Heart left ventricle (tissue), 16 donors: ENCODE measurements at regions of chr11 and their contacts with region 1.

Region 1: DNA sequence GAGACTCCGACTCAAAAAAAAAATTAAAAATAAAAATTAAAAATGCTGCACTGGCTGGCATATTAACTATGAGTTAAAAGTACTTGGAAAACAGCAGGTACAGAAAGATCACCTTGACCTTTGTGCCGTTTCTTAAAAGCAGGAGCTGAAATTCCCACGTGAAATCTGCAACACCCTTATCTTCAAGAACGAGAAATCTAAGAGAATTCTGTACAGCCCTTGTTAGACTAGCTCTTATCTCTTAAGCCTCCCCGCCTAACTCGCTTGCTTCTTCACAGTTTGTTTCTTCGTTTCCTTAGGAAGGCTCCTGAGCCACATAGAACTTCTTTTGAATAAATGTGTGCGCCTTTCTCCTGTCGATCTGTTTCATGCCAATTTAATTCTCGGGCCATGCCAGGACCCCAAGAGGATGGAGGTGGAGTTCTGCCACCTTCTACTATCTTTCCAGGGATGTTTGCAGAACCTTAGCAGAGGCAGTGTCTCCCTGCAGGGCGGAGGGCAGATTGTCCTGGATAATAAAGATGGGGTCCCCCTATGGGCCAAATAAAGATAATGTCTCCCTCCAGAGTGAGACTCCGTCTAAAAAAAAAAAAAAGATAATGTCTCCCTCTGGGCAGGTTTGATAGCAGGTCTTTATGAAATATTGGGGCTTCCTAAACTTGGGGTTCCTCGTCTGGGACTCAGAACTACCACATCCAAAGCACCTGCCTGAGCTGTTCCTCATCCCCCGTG is 27.4 kb upstream of the SYT8 start:
- DNase-seq: no peak
- ATAC-seq: no peak
- H3K4me3 ChIP-seq: no peak overlapping the region
- H3K27ac ChIP-seq: no peak overlapping the region
- H3K4me1 ChIP-seq: peaks cover 0 to 11% (median 0%) of the 10 kb centered on the region in 12 donors
- H3K27me3 ChIP-seq: peaks cover 0 to 54% (median 4%) of the 10 kb centered on the region in 9 donors
- CTCF ChIP-seq: no peak
- POLR2A ChIP-seq: no peak

Region 2: DNA sequence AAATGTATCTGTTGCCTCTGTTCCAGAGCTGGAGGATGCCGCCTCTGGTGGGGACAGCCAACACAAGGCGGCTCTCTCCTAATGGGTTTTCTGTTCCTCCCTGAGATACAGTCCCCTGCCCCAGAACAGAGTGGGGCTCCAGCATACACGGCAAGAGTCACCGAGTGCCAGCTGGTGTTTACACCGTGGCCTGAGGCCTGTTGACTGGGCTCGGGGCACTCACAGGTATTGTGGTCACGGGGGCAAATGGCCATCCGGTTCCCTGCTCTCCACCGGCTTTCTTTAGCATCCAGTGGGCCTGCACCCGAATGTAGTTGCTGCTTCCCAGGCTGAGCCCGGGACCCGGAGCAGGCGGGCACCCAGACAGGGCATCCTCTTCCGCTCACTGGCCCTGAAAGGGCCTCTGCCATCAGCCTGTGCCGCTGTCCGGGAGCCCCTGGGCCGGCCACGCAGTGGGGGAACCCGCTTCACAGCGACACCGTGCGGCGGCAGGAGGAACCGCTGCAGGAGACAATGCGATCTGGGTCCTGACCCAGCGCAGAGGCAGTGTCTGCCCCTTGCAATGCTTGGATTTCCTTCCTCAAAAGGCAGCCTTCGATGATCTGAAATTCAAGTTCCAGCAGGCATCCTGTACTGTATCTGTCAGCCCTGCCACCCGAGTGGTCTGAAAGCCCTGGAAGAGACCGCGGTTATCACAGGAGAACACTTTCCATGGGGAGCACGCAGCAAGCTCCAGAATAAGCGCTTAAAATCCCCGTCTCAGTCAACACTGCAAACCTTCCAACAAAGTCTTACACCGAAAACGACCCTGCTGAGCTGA is 178.7 kb before region 1 on chr11:
- intact Hi-C with region 1: no loop called
- DNase-seq: peak; percentile 49 to 82 (median 60)
- ATAC-seq: peak; percentile 57 to 89 (median 84)
- H3K4me3 ChIP-seq: no peak overlapping the region
- H3K27ac ChIP-seq: no peak overlapping the region
- H3K4me1 ChIP-seq: peaks cover 0 to 8% (median 3%) of the 10 kb centered on the region in 12 donors
- H3K27me3 ChIP-seq: peaks cover 0 to 49% (median 12%) of the 10 kb centered on the region in 9 donors
- CTCF ChIP-seq: peak; percentile 79 to 98 (median 89)
- POLR2A ChIP-seq: no peak

Region 3: GRCh38 chr11:1706634-1707400 is 100.6 kb before region 1 on chr11:
- intact Hi-C with region 1: loop called in 2 of 10 experiments (anchors 5 to 10 kb)
- DNase-seq: peak in 1 of 5 donors; percentile 44
- ATAC-seq: peak in 3 of 4 donors; percentile 70 to 90 (median 74)
- H3K4me3 ChIP-seq: no peak overlapping the region
- H3K27ac ChIP-seq: no peak overlapping the region
- H3K4me1 ChIP-seq: no peaks in the 10 kb centered on the region
- H3K27me3 ChIP-seq: peaks cover 0 to 6% (median 0%) of the 10 kb centered on the region in 9 donors
- CTCF ChIP-seq: peak in 11 of 12 donors; percentile 9 to 50 (median 29)
- POLR2A ChIP-seq: no peak

Region 4: DNA sequence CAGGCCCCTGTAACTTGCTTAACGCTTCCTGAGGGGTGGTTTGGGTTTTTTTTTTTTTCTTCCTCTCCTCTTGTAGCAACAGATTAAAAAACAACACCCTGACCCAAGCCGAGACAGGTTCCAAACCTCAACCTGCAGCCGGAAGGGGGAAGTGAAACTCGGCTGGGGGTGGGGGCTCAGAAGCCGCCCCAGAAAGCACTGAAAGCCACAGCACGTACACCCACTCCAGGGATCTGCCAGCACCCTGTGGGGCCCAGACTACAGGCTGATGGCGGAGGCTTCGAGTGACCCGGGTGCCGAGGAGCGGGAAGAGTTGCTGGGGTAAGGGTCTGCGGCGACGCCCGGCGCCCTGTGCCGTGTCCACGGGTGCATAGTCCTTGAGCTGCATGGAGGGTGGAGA is 45.4 kb after region 1 on chr11 and contains the start of gene LSP1:
- intact Hi-C with region 1: no loop called
- DNase-seq: no peak
- ATAC-seq: peak in 2 of 4 donors; percentile 7 to 32
- H3K4me3 ChIP-seq: peak within 1 kb of the TSS in 6 of 12 donors; percentile 21 to 63 (median 32)
- H3K27ac ChIP-seq: peak within 1 kb of the TSS in 5 of 12 donors; percentile 30 to 94 (median 42)
- H3K4me1 ChIP-seq: peaks cover 0 to 79% (median 0%) of the 10 kb centered on the region in 12 donors
- H3K27me3 ChIP-seq: no peaks in the 10 kb centered on the region
- CTCF ChIP-seq: no peak
- POLR2A ChIP-seq: no peak
- total RNA-seq, gene LSP1: 11.4 to 86.8 (median 16.4) TPM